Activated T-helper 1 cell treated with anti-CD3 and anti-CD28 coated beads, Interleukin-12 subunit alpha, Interleukin-12 subunit beta, Interleukin-2, Interleukin-4 antibody, amounts not matched to agents 30 ng/mL and 10 ng/mL and 1 ng/mL, durations not matched to agents 14 hours and 24 hours and 36 hours (primary cell): ENCODE measurements at regions of chr14 and their contacts with region 1.

Region 1: GRCh38 chr14:59189786-59190771 is 1.6 kb downstream of the DAAM1 start:
- DNase-seq: peak; percentile 73
- H3K4me3 Mint-ChIP-seq: peak overlapping the region; percentile 96
- H3K27ac Mint-ChIP-seq: peak overlapping the region; percentile 87
- H3K4me1 Mint-ChIP-seq: peaks cover 11% of the 10 kb centered on the region
- H3K27me3 Mint-ChIP-seq: peaks cover 17% of the 10 kb centered on the region

Region 2: DNA sequence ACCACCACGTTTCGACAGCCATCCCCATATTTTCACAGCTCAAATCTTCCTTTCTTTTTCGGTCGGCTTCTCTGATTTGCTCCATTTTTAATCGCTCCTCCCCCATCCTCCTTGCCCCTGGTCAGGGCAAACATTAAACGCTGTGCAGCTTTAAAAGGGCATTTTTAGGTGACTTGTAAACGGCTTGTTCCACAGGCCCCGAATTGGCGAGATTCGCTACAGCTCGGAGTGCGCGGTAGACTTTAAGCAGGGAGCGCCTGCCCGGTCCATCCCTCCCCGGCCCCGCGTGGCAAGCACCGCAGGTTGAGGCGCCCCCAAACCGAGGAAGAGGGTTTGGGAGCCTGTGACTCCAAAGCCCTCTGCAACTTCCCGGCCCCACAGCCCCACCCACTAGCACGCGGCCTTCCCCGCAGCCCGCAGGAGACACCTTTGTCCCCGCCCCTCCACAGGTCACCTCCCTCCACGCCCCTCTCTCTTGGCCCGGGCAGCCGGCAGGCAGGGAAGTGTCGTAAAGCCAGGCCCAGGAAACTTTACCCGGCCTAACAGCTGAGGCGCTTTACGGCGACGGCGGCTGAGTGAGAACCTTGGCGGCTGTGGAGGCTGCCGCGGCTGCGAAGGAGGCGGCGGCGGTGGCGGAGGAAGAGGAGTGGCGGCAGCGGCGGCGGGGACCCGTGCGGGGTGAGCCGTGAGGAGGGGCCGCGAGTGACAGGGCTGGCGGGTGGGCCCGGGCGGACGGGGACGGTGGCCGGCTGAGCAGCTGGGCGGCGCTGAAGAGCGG is 1799.9 kb before region 1 on chr14 and contains the start of gene NAA30:
- intact Hi-C with region 1: loop called (anchors 2 kb)
- DNase-seq: peak; percentile 91
- H3K4me3 Mint-ChIP-seq: peak within 1 kb of the TSS; percentile 97
- H3K27ac Mint-ChIP-seq: peak within 1 kb of the TSS; percentile 94
- H3K4me1 Mint-ChIP-seq: peaks cover 49% of the 10 kb centered on the region
- H3K27me3 Mint-ChIP-seq: peaks cover 2% of the 10 kb centered on the region
- total RNA-seq, gene NAA30: 20.8 and 20.9 TPM in 2 replicates

Region 3: GRCh38 chr14:59275653-59276052 is 85.6 kb after region 1 on chr14:
- intact Hi-C with region 1: loop called (anchors 2 kb)
- DNase-seq: no peak
- H3K4me3 Mint-ChIP-seq: no peak overlapping the region
- H3K27ac Mint-ChIP-seq: no peak overlapping the region
- H3K4me1 Mint-ChIP-seq: peaks cover 23% of the 10 kb centered on the region
- H3K27me3 Mint-ChIP-seq: peaks cover 3% of the 10 kb centered on the region

Region 4: DNA sequence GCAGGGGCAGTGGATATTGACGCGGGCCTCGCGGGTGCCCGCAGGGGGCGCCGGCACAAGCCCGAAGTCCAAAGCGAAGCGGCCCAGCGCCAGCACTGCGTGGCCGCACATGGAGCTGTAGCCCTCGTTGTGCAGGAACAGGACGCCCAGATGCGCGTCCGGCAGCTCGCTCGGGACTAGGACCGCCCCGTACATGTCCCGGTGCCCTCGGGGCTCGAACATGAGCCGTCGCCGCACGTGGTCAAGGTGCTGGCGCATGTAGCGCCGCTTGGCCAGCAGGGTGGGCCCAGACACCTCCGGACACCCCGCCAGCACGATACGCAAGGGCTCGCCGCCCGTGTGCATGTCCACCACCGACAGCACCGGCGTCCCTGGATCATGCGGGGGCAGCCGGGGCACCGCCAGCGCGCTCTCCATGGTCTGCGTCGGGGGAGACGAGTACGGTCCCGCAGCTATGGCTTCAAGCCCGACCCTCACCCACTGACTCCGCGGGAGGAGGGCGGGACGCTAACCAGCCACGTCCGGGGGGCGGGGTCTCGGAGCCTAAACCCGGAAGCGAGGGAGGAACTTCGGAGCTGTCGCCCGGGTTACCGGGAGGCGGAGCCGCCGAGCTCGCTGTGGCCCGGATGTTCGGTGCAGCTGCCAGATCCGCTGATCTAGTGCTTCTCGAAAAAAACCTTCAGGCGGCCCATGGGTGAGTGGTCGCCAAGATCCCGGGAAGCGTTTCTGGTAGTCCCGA is 294.0 kb after region 1 on chr14 and contains the starts of genes JKAMP and L3HYPDH:
- intact Hi-C with region 1: loop called (anchors 1 kb)
- DNase-seq: peak; percentile 95
- H3K4me3 Mint-ChIP-seq: peak within 1 kb of the TSS; percentile 94
- H3K27ac Mint-ChIP-seq: peak within 1 kb of the TSS; percentile 90
- H3K4me1 Mint-ChIP-seq: peaks cover 61% of the 10 kb centered on the region
- H3K27me3 Mint-ChIP-seq: no peaks in the 10 kb centered on the region
- total RNA-seq, gene JKAMP: 27.6 and 28.8 TPM in 2 replicates
- total RNA-seq, gene L3HYPDH: 14.0 and 15.9 TPM in 2 replicates

Region 5: GRCh38 chr14:60151715-60152114 is 961.6 kb after region 1 on chr14:
- intact Hi-C with region 1: loop called (anchors 10 kb)
- DNase-seq: peak; percentile 50
- H3K4me3 Mint-ChIP-seq: peak overlapping the region; percentile 26
- H3K27ac Mint-ChIP-seq: peak overlapping the region; percentile 87
- H3K4me1 Mint-ChIP-seq: peaks cover 42% of the 10 kb centered on the region
- H3K27me3 Mint-ChIP-seq: no peaks in the 10 kb centered on the region

Region 6: GRCh38 chr14:60235440-60235839 is 1045.4 kb after region 1 on chr14:
- intact Hi-C with region 1: no loop called
- DNase-seq: no peak
- H3K4me3 Mint-ChIP-seq: no peak overlapping the region
- H3K27ac Mint-ChIP-seq: no peak overlapping the region
- H3K4me1 Mint-ChIP-seq: no peaks in the 10 kb centered on the region
- H3K27me3 Mint-ChIP-seq: peaks cover 31% of the 10 kb centered on the region